AG04449 (cell line): ENCODE measurements at regions of chr2 and their contacts with region 1.

Region 1: DNA sequence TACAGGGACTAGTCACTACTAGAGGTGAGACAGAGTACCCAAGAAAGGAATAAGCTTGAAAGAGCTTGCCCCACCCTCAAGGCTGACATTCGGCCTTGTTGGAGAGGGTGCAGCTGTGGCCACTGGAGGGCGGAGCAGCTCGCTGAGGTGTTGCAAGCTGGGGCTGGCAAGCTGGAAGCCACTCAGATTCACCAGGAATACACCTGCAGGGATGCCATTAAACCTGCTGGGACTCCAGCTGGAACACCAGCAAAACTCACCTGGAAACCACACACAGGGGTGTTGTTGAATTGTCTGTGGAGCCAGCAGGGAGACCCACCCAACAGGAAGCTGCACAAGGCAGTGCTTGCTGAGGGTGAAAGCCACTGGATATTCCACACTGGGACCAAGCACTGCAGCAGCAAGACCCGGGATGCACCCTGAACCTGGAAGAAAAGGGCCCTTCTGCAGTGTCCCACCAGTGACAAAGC is 26.1 kb downstream of the KCTD18 start:
- DNase-seq: no peak
- H3K4me3 ChIP-seq: no peak overlapping the region
- CTCF ChIP-seq: peak; percentile 49

Region 2: DNA sequence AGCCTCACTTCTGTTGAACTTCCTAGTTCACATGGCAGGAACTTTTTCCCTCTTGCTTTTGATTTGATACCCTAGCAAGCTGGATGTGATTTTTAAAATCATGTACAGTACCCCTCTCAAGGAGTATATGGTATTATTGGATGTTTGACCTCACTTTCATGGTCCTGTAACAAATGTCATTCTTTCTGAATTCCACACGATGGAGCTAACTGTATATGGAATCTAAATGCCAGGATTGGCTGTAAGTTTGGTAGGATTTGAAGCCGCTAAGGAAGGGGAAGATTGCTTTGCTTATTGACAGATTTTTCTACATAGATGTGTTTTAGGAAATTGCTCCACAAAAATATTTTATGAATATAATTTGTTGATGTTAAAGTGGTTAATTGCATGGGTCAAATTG is 510.1 kb before region 1 on chr2:
- CTCF ChIA-PET with region 1: interaction called, 242 read pairs
- POLR2A ChIA-PET with region 1: interaction called, 4 read pairs
- DNase-seq: peak; percentile 14
- H3K4me3 ChIP-seq: no peak overlapping the region
- CTCF ChIP-seq: peak; percentile 41

Region 3: GRCh38 chr2:199985625-199986207 is 498.0 kb before region 1 on chr2:
- CTCF ChIA-PET with region 1: interaction called, 242 read pairs
- POLR2A ChIA-PET with region 1: no interaction called
- DNase-seq: no peak
- H3K4me3 ChIP-seq: no peak overlapping the region
- CTCF ChIP-seq: peak; percentile 70

Region 4: DNA sequence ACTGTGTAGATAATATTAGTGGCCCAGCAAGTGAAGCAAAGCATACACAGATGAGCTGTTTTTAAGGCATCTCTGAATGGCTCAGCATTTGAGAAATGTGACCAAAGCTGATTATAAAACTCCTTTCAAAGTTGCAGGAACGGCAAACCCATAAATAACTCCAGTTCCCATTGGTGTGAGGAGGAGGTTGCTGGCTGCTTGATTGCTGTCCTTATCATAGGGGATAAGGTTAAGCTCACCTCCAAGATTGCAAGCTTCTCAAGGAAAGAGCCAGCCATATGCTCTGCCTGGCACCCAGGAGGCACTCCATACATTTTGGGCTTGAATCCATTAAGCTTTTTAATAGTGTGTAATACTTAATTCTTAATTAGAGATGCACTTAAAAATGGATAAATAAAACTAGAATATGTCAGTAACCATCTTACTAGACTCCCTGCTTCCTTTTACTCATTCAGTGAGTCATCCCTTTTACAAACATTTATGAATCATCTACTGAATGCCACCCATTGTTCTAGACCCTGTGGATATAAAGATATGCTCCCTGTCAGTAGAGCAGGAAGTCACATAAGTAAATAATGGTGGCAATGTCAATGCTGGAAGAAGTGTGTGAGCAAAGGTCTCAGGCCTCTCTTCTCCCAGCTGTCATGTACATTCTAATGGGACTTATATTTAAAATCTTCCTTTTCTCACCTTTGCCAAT is 78.0 kb before region 1 on chr2:
- CTCF ChIA-PET with region 1: interaction called, 13 read pairs
- POLR2A ChIA-PET with region 1: no interaction called
- DNase-seq: no peak
- H3K4me3 ChIP-seq: no peak overlapping the region; the same call in 1 of the 2 replicates
- CTCF ChIP-seq: no peak

Region 5: GRCh38 chr2:200498402-200499162 is 14.8 kb after region 1 on chr2:
- CTCF ChIA-PET with region 1: interaction called, 18 read pairs
- POLR2A ChIA-PET with region 1: no interaction called
- DNase-seq: no peak
- H3K4me3 ChIP-seq: no peak overlapping the region
- CTCF ChIP-seq: no peak

Region 6: GRCh38 chr2:200540793-200541192 is 57.0 kb after region 1 on chr2:
- CTCF ChIA-PET with region 1: no interaction called
- POLR2A ChIA-PET with region 1: no interaction called
- DNase-seq: no peak
- H3K4me3 ChIP-seq: no peak overlapping the region
- CTCF ChIP-seq: no peak

Region 7: GRCh38 chr2:200703127-200703925 is 219.6 kb after region 1 on chr2:
- CTCF ChIA-PET with region 1: interaction called, 13 read pairs
- POLR2A ChIA-PET with region 1: no interaction called
- DNase-seq: peak; percentile 26
- H3K4me3 ChIP-seq: no peak overlapping the region
- CTCF ChIP-seq: peak; percentile 41